ENCODE measurements at regions of chr2 and their contacts with region 1.

Region 1: DNA sequence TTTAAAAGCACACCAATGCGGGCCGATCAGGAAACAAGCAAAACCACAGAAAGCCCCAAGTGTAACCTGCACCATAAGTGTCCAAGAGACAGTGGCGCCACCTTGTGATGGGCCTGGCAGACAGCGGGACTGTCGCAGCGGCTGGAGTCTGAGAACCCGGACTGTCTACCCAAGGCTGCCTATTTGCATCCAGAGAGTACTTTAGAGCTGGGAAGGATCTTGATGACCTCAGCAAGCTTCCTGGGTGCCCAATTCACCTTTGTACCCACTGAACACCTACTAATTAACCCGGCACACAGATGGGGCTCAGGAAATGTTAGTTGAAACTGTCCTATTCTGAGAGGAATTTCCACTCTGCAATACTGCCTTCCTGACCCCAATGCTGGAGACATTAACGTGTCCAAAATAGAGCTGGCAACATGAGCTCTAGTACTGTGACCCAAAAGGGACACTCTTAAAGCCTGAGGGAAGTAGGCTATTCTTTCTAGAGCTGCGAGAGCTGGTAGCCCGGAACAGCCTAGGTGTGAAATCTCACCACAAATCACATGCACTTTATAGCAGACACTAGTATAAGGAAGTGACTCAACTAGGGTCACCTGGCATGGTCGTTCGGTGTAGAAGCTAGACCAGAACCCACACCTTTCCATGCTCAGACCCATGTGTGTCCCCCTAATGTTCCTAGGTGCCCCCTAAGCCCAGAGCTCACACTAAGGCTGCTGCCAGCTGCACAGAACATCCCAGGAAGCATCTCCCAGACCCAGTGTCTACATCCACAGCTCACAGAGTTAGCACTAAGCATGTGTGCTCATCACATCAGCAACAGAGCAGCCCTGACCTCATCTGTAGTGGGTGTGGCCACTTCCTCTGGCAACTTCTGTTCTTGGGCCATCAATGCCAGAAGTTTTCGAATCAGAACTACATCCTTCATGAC is 25.4 kb downstream of the POLR1A start:
- H3K4me3 ChIP-seq: no peak overlapping the region
- H3K27ac ChIP-seq: no peak overlapping the region
- H3K4me1 ChIP-seq: no peaks in the 10 kb centered on the region
- CTCF ChIP-seq: peak; percentile 54

Region 2: DNA sequence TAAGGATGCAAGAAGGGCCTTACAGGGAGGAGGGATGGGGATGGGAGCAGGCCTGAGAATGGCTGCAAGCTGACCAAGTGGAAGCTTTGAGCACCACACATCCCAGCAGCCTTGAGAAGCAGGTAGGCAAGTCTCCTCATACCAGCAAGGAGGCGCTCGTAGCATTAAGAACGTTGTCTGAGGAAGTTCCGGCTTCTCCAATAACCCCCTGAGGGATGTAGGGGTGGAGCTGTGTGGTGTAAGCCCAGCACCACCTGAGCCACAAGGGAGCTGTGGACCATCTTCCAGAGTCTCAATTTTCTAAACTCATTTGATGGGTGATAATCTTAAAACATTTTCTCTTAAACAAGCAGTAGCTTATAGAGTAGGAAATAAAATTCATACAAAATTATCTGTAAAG is 242.1 kb before region 1 on chr2:
- CTCF ChIA-PET with region 1: interaction called, 216 read pairs
- POLR2A ChIA-PET with region 1: no interaction called
- H3K4me3 ChIP-seq: no peak overlapping the region
- H3K27ac ChIP-seq: no peak overlapping the region
- H3K4me1 ChIP-seq: no peaks in the 10 kb centered on the region
- CTCF ChIP-seq: no peak

Region 3: GRCh38 chr2:86000131-86000937 is 79.9 kb before region 1 on chr2:
- CTCF ChIA-PET with region 1: no interaction called
- POLR2A ChIA-PET with region 1: no interaction called
- H3K4me3 ChIP-seq: no peak overlapping the region
- H3K27ac ChIP-seq: no peak overlapping the region
- H3K4me1 ChIP-seq: no peaks in the 10 kb centered on the region
- CTCF ChIP-seq: no peak

Measured in HEK293 (cell line).